ENCODE measurements at regions of chr20 and their contacts with region 1.

Region 1: DNA sequence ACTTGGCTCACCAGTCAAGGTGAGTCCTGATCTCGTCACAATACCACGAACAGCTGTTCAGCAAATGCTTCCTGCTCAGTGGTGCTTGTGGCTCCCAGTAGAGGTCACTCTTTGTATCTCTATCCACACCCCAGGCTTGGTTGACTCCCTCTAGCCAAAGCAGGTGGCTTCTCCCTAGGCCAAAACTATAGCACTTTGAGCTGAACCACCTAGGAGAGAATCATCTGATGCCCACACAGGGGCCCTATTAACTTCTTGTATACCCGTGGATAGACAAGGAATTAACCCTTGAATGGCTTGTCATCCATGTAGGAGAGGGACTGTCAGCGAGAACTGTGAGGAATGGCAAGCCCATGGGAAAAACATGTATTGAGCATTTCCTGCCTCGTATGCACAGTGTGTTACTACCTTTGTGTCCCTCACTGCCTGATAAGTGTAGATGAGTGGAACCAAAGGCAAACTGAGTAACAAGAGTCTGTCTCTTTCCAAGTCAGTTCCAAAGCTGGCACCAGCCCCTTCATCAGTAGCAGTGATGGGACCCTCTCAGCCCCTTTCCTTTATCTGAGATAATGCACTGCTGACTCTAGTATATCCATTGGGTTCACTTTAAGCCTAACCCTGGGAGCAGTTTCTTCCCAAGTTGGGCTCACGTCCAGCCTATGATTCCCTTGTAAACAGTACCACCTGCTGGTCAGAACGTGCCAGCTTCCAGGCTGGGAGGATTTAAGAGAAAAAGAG is 42.5 kb downstream of the EIF2S2 start:
- DNase-seq: peak; percentile 72
- H3K4me3 ChIP-seq: no peak overlapping the region
- H3K27ac ChIP-seq: no peak overlapping the region
- H3K4me1 ChIP-seq: peaks cover 46% of the 10 kb centered on the region
- H3K27me3 ChIP-seq: no peaks in the 10 kb centered on the region
- CTCF ChIP-seq: peak; percentile 87 to 88

Region 2: DNA sequence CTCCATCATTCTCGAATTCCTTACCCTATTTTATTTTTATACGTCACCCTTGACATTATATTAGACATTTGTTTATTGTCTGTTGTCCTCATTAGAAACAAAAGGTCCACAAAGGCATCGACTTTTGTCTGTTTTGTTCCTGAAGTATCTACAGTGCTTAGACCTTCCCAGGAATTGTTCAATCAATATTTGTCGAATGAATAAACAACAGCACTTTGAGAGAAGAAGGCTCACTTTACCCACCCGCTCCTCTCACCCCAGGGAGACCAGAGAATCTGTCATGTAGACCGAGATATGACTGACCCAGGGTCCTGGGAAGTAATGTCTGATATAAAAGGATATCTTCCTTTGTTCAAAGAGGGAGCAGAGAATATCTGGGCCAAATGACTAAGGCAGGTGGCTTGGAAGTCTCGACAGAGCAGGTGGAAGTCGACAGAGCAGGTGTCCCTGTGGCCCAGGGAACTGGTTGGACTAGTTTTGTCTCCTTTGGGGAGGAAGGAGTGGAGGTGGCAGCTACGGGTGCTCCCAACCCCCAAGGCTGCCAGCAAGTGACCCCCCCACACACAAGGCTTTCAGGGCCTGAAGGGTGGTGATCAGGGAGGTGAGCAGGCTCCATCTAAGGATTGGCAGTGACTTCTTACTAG is 273.1 kb before region 1 on chr20:
- CTCF ChIA-PET with region 1: no interaction called
- dilution Hi-C with region 1: no loop called
- in situ Hi-C with region 1: no loop called
- intact Hi-C with region 1: loop called (anchors 5 kb)
- DNase-seq: peak; percentile 47
- H3K4me3 ChIP-seq: no peak overlapping the region
- H3K27ac ChIP-seq: no peak overlapping the region
- H3K4me1 ChIP-seq: peaks cover 13% of the 10 kb centered on the region
- H3K27me3 ChIP-seq: no peaks in the 10 kb centered on the region
- CTCF ChIP-seq: no peak

Region 3: GRCh38 chr20:33915726-33916331 is 153.7 kb before region 1 on chr20:
- CTCF ChIA-PET with region 1: interaction called, 12 read pairs
- dilution Hi-C with region 1: no loop called
- in situ Hi-C with region 1: no loop called
- intact Hi-C with region 1: loop called (anchors 1 kb)
- DNase-seq: peak; percentile 15
- H3K4me3 ChIP-seq: no peak overlapping the region
- H3K27ac ChIP-seq: no peak overlapping the region
- H3K4me1 ChIP-seq: peaks cover 3% of the 10 kb centered on the region
- H3K27me3 ChIP-seq: no peaks in the 10 kb centered on the region
- CTCF ChIP-seq: peak; percentile 74 to 77

Region 4: DNA sequence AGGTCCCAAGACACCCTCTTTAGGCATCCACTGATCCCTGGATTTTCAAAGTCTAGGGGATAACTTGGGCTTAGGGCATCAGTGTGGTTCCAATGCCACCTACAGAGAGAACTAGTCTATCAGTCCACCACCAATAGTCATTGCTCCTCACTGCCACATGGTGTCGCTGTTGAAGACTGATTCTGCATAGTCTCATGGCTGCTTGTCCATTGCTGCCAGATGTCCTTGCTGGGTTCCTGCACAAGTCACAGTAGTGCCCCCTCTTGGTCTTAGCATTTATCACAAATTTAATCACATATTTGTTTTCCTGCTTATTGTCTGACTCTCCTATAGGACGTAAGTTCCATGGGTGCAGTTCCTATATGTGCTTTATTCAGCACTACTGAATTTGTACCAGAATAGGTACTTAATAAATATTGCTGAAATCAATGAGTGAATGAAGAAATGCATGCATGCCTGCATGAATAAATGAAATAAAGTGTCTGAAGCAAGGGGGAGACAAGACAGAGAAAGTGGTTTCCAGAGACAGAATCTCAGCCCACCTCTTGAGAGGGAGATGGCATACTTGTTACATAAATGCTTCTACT is 121.7 kb before region 1 on chr20:
- CTCF ChIA-PET with region 1: no interaction called
- dilution Hi-C with region 1: no loop called
- in situ Hi-C with region 1: no loop called
- intact Hi-C with region 1: loop called (anchors 1 kb)
- DNase-seq: peak; percentile 46
- H3K4me3 ChIP-seq: no peak overlapping the region
- H3K27ac ChIP-seq: no peak overlapping the region
- H3K4me1 ChIP-seq: no peaks in the 10 kb centered on the region
- H3K27me3 ChIP-seq: no peaks in the 10 kb centered on the region
- CTCF ChIP-seq: peak; percentile 60 to 77

Region 5: GRCh38 chr20:34022154-34022838 is 47.2 kb before region 1 on chr20:
- CTCF ChIA-PET with region 1: no interaction called
- dilution Hi-C with region 1: no loop called
- in situ Hi-C with region 1: no loop called
- intact Hi-C with region 1: loop called (anchors 5 kb)
- DNase-seq: peak; percentile 15
- H3K4me3 ChIP-seq: no peak overlapping the region
- H3K27ac ChIP-seq: no peak overlapping the region
- H3K4me1 ChIP-seq: peaks cover 61% of the 10 kb centered on the region
- H3K27me3 ChIP-seq: no peaks in the 10 kb centered on the region
- CTCF ChIP-seq: peak; percentile 25 to 38